Mammary epithelial cell (primary cell): ENCODE measurements at regions of chr14 and their contacts with region 1.

Region 1: GRCh38 chr14:69005432-69006147 is 26.5 kb upstream of the ACTN1 start:
- DNase-seq: peak; percentile 88
- H3K4me3 ChIP-seq: no peak overlapping the region
- H3K27ac ChIP-seq: peak overlapping the region; percentile 6
- H3K4me1 ChIP-seq: peaks cover 17% of the 10 kb centered on the region
- H3K27me3 ChIP-seq: no peaks in the 10 kb centered on the region
- CTCF ChIP-seq: no peak

Region 2: DNA sequence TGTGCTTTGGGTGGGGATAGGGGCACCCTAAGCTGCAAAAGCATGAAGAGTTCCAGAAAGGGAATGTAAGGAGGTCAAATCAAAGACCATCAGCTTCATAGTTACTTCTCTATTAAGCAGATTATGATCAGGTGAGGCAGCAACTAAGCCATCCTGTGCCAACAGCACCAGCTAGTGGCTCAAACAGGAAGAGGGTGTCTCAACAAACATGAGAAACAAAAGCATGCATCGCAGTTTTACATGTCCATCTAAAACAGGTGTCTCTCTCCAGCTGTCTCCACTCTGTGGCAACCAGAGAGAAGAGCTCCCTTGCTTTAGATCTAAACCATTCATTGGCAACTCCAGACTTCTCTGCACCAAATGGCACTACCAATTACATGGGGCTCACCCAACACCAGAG is 79.4 kb before region 1 on chr14:
- CTCF ChIA-PET with region 1: no interaction called
- dilution Hi-C with region 1: loop called (anchors 5 kb)
- in situ Hi-C with region 1: no loop called
- intact Hi-C with region 1: no loop called
- DNase-seq: no peak
- H3K4me3 ChIP-seq: no peak overlapping the region
- H3K27ac ChIP-seq: no peak overlapping the region
- H3K4me1 ChIP-seq: peaks cover 41% of the 10 kb centered on the region
- H3K27me3 ChIP-seq: no peaks in the 10 kb centered on the region
- CTCF ChIP-seq: peak; percentile 64 to 78

Region 3: GRCh38 chr14:68961781-68962584 is 43.6 kb before region 1 on chr14:
- CTCF ChIA-PET with region 1: no interaction called
- dilution Hi-C with region 1: no loop called
- in situ Hi-C with region 1: no loop called
- intact Hi-C with region 1: no loop called
- DNase-seq: peak; percentile 92
- H3K4me3 ChIP-seq: no peak overlapping the region
- H3K27ac ChIP-seq: peak overlapping the region; percentile 43
- H3K4me1 ChIP-seq: peaks cover 99% of the 10 kb centered on the region
- H3K27me3 ChIP-seq: no peaks in the 10 kb centered on the region
- CTCF ChIP-seq: no peak

Region 4: GRCh38 chr14:69043596-69044260 is 38.1 kb after region 1 on chr14:
- CTCF ChIA-PET with region 1: no interaction called
- dilution Hi-C with region 1: loop called (anchors 5 kb)
- in situ Hi-C with region 1: no loop called
- intact Hi-C with region 1: no loop called
- DNase-seq: no peak
- H3K4me3 ChIP-seq: no peak overlapping the region
- H3K27ac ChIP-seq: no peak overlapping the region
- H3K4me1 ChIP-seq: peaks cover 26% of the 10 kb centered on the region
- H3K27me3 ChIP-seq: no peaks in the 10 kb centered on the region
- CTCF ChIP-seq: no peak